ENCODE measurements at regions of chr5 and their contacts with region 1.

Region 1: GRCh38 chr5:59673438-59674058 is 220.0 kb downstream of the PDE4D start:
- DNase-seq: no peak
- CTCF ChIP-seq: no peak

Region 2: GRCh38 chr5:59188419-59189225 is 484.9 kb before region 1 on chr5:
- in situ Hi-C with region 1: loop called (anchors 25 kb)
- DNase-seq: peak; percentile 35
- CTCF ChIP-seq: peak; percentile 43

Region 3: DNA sequence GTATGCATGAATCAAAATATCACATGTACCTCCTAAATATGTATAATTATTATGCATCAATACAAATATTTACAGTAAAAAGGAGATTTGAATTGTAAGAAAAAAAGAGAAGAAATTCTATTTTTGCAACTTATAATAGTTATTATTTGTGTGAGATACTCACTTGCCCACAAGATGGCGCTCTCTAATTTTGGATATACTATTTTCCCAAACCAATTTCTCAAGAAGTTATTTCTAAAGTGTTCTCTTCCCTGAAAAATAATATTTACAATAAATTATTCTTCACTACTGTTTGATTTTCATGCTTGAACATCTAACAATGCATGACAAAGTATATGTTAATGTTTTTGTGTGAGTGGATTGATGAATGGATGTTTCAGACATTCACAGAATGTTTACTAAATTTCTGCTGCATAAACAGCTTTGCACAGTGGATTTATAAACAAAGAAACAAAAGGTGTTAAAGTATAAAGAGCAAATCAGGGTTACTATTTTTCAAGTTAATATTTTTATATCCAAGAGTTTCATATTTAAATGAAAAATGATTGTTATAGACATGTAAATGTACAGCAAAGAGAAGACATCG is 283.4 kb before region 1 on chr5:
- in situ Hi-C with region 1: loop called (anchors 5 kb)
- DNase-seq: peak; percentile 23
- CTCF ChIP-seq: no peak

Region 4: DNA sequence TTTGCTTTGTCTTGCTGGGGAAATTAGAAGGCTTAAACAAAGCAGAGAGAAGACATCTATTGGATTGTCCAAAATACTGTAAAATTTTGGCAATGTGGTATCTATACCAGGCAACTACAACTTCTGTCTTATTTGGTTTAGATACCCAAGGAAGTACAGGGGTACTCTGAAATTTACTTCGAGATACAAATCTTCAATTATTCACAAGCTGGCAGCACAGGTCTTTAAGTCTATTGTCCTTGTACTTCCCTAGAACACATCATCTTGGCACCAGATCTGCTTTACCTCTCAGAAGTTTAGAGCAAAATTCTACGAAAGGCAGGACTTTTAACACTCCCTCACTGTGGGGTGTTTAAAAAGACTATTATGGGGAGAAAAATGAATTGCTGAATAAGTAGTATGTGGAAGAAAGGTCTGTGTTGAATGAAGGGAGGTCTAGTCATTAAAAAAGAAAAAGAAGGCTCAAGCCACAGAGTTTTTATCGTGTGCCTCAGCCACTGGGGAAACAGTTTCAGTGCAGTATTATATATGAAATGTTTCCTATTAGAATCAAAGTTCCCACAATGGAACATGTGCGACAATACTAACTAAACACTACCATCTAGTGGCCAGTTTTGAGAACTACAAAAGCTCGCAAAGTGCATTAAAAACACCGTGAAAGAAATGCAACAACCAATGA is 126.3 kb after region 1 on chr5:
- in situ Hi-C with region 1: loop called (anchors 10 kb)
- DNase-seq: peak; percentile 37
- CTCF ChIP-seq: peak; percentile 59

Region 5: GRCh38 chr5:60210810-60211209 is 537.3 kb after region 1 on chr5:
- in situ Hi-C with region 1: no loop called
- DNase-seq: no peak
- CTCF ChIP-seq: no peak

Measured in GM13976 (cell line).